ENCODE measurements at regions of chr14 and their contacts with region 1.

Region 1: GRCh38 chr14:62179367-62180018 is 417.3 kb downstream of the SNAPC1 start:
- DNase-seq: peak; percentile 58 to 60
- H3K4me3 ChIP-seq: no peak overlapping the region
- H3K4me3 Mint-ChIP-seq: no peak overlapping the region
- H3K27ac Mint-ChIP-seq: no peak overlapping the region
- H3K4me1 ChIP-seq: no peaks in the 10 kb centered on the region
- H3K4me1 Mint-ChIP-seq: no peaks in the 10 kb centered on the region
- H3K27me3 ChIP-seq: no peaks in the 10 kb centered on the region
- H3K27me3 Mint-ChIP-seq: no peaks in the 10 kb centered on the region
- CTCF ChIP-seq: peak; percentile 62 to 64

Region 2: DNA sequence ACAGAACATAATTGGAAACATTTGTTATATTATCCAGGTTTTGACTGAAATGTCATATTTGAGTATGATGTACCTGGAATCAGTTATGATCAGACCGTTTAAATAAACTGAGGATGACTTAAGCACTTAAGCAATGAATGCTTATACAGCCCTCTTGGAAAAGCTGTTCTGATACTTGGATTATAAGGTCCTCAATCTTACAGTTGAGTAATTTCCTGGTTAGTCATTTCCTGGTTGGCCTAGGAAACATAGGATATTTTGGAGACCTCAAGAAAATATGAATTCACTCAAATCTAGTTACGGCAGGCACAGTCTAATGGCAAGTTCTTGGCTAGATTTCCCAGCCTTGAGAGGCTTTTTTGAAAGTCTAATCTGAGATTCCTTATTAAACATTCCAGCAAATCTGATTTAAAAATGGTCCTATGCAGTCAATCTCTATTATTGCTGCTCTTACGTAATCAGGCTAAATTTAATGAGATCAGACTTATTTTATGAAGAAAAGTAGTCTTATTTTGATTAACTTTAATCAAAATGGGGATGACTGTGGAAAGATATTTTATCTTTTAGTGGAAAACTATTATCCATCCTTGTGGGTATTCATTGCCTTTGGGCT is 29.9 kb after region 1 on chr14:
- CTCF ChIA-PET with region 1: no interaction called
- POLR2A ChIA-PET with region 1: no interaction called
- intact Hi-C with region 1: no loop called
- DNase-seq: no peak
- H3K4me3 ChIP-seq: no peak overlapping the region
- H3K4me3 Mint-ChIP-seq: no peak overlapping the region
- H3K27ac Mint-ChIP-seq: no peak overlapping the region
- H3K4me1 ChIP-seq: no peaks in the 10 kb centered on the region
- H3K4me1 Mint-ChIP-seq: no peaks in the 10 kb centered on the region
- H3K27me3 ChIP-seq: no peaks in the 10 kb centered on the region
- H3K27me3 Mint-ChIP-seq: no peaks in the 10 kb centered on the region
- CTCF ChIP-seq: no peak

Region 3: DNA sequence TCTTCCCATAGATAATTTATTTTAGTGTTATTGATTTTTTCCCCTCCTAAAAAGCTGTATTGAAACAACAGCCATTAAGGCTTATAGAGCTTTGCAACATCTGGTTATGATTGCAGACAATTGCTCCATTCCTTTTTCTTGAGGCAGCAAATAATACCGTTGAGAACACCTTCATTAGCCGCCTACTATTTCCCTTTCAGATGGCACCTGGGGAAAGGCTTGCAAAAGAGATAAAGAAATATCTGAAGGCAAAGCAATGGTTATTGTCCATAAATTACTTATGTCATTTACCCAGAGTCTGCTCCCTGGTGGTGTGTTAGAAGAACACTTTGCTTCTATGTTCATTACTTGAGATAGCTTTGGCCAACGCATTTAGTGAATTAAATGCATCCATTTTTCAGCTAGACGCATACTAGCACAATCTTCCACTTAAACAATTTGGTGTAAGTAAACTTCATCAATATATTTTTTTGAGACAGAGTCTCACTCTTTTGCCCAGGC is 488.0 kb after region 1 on chr14:
- CTCF ChIA-PET with region 1: no interaction called
- POLR2A ChIA-PET with region 1: no interaction called
- intact Hi-C with region 1: loop called (anchors 2 kb)
- DNase-seq: no peak
- H3K4me3 ChIP-seq: no peak overlapping the region
- H3K4me3 Mint-ChIP-seq: no peak overlapping the region
- H3K27ac Mint-ChIP-seq: no peak overlapping the region
- H3K4me1 ChIP-seq: peaks cover 20% of the 10 kb centered on the region
- H3K4me1 Mint-ChIP-seq: peaks cover 24% of the 10 kb centered on the region
- H3K27me3 ChIP-seq: no peaks in the 10 kb centered on the region
- H3K27me3 Mint-ChIP-seq: no peaks in the 10 kb centered on the region
- CTCF ChIP-seq: no peak

Region 4: GRCh38 chr14:63039800-63040380 is 860.4 kb after region 1 on chr14:
- CTCF ChIA-PET with region 1: interaction called, 3 read pairs
- POLR2A ChIA-PET with region 1: no interaction called
- intact Hi-C with region 1: loop called (anchors 1 kb)
- DNase-seq: peak in 1 of 2 experiments; percentile 35
- H3K4me3 ChIP-seq: no peak overlapping the region
- H3K4me3 Mint-ChIP-seq: no peak overlapping the region
- H3K27ac Mint-ChIP-seq: no peak overlapping the region
- H3K4me1 ChIP-seq: no peaks in the 10 kb centered on the region
- H3K4me1 Mint-ChIP-seq: peaks cover 6% of the 10 kb centered on the region
- H3K27me3 ChIP-seq: no peaks in the 10 kb centered on the region
- H3K27me3 Mint-ChIP-seq: no peaks in the 10 kb centered on the region
- CTCF ChIP-seq: peak; percentile 42 to 53

Region 5: GRCh38 chr14:63134801-63135200 is 955.3 kb after region 1 on chr14:
- CTCF ChIA-PET with region 1: no interaction called
- POLR2A ChIA-PET with region 1: no interaction called
- intact Hi-C with region 1: loop called (anchors 5 kb)
- DNase-seq: peak in 1 of 2 experiments; percentile 21
- H3K4me3 ChIP-seq: no peak overlapping the region
- H3K4me3 Mint-ChIP-seq: no peak overlapping the region
- H3K27ac Mint-ChIP-seq: no peak overlapping the region
- H3K4me1 ChIP-seq: no peaks in the 10 kb centered on the region
- H3K4me1 Mint-ChIP-seq: no peaks in the 10 kb centered on the region
- H3K27me3 ChIP-seq: no peaks in the 10 kb centered on the region
- H3K27me3 Mint-ChIP-seq: no peaks in the 10 kb centered on the region
- CTCF ChIP-seq: peak; percentile 39 to 42

Measured in Caco-2 (cell line).